Activated B cell treated with CpG ODN at 0.5 μM for 24 hours (primary cell): ENCODE measurements at regions of chr2 and their contacts with region 1.

Region 1: DNA sequence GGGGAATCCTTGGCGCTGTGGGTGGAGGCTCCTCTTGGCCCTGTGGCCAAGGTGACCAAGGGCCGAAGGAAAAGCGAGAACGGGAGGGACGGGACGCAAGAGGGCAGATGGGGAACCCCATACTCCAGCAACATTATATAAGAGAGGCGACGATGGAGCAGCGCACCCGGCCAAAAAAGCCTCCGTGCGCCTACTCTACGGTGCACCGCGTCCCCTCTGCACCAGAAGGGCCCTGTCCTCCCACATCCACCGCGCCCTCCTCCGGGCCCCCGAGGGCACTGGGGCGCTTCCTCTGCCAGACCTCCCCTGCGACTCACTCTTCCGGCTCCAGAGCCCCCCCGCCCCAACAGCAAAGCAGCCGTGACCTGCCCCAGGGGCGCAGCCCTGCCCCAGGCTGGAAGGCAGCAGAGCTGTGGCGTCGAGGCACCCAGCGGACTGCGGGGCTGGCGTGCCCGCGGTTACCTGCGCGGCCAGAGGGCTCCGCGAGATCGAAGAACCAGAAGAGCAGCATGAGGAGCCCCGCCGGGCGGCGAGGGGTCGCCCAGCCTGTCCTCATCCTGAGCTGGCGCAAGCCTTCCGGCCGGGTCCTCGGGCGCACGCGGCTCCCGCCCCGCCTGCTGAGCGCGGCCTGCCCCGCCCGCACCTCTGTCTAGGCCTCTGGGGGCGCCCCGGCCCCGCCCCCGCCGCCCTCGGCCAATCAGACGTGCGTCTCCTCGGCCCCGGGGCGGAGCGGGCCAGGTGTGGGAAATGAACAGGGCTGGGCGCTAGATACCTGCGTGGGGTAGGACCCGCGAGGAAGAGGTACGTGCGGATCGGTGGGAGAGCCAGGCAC is 106.3 kb upstream of the CD302 start:
- DNase-seq: peak; percentile 87
- ATAC-seq: peak; percentile 85
- H3K4me3 Mint-ChIP-seq: peak within 1 kb of the TSS; percentile 99
- H3K27ac Mint-ChIP-seq: peak within 1 kb of the TSS; percentile 98
- H3K4me1 Mint-ChIP-seq: peaks cover 57% of the 10 kb centered on the region
- H3K27me3 Mint-ChIP-seq: no peaks in the 10 kb centered on the region
- CTCF ChIP-seq: no peak

Region 2: GRCh38 chr2:159286709-159287441 is 617.5 kb before region 1 on chr2:
- CTCF ChIA-PET with region 1: no interaction called
- POLR2A ChIA-PET with region 1: interaction called, 5 read pairs
- intact Hi-C with region 1: loop called (anchors 10 kb)
- DNase-seq: peak; percentile 97
- ATAC-seq: peak; percentile 99
- H3K4me3 Mint-ChIP-seq: peak overlapping the region; percentile 93
- H3K27ac Mint-ChIP-seq: peak overlapping the region; percentile 84
- H3K4me1 Mint-ChIP-seq: peaks cover 41% of the 10 kb centered on the region
- H3K27me3 Mint-ChIP-seq: peaks cover 2% of the 10 kb centered on the region
- CTCF ChIP-seq: no peak

Region 3: DNA sequence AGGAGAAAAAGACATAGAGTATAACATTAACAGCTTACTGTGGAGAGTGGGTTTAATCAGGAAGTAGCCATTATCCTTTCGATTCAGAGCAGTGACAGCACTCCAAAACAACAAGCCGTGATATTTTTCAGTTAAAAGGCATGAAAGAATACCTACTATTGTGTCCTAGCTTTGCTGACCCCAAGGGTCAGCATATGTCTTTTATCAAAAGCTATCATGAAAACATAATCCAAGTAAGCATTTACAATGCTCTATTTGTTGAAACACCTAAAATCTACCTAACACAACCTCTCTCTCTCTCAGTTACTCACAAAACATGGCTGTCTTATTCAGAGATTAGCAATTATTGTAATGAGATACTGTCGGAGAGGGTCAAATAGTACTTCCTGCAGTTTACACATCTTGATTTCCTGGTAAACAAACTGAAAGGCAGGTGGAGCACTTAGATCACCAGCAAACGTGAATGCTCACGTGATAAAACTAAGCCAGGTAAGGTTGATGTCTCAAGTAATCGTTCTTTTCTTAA is 388.0 kb before region 1 on chr2:
- CTCF ChIA-PET with region 1: no interaction called
- POLR2A ChIA-PET with region 1: no interaction called
- intact Hi-C with region 1: loop called (anchors 2 kb)
- DNase-seq: no peak
- ATAC-seq: peak; percentile 89
- H3K4me3 Mint-ChIP-seq: peak overlapping the region; percentile 85
- H3K27ac Mint-ChIP-seq: peak overlapping the region; percentile 87
- H3K4me1 Mint-ChIP-seq: peaks cover 31% of the 10 kb centered on the region
- H3K27me3 Mint-ChIP-seq: no peaks in the 10 kb centered on the region
- CTCF ChIP-seq: no peak

Region 4: DNA sequence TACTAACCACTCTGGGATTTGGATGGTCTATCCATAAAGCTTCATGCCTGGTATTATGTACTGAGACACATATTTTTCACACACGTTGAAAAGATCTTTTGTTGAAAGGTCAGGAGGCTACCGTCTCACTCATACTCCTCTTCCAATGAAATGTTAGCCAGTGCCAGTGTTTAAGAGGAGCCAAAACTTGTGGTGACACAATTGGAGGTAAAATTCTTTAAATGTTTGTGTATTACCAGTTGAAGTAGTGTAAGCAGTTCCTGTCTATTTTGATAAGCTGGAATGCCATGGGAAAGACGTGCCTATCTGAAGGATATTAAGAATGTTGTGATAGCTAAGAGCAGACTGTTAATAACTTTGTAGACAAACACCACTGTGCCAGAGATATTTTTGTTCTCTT is 160.0 kb before region 1 on chr2:
- CTCF ChIA-PET with region 1: no interaction called
- POLR2A ChIA-PET with region 1: no interaction called
- intact Hi-C with region 1: no loop called
- DNase-seq: no peak
- ATAC-seq: no peak
- H3K4me3 Mint-ChIP-seq: no peak overlapping the region
- H3K27ac Mint-ChIP-seq: no peak overlapping the region
- H3K4me1 Mint-ChIP-seq: no peaks in the 10 kb centered on the region
- H3K27me3 Mint-ChIP-seq: no peaks in the 10 kb centered on the region
- CTCF ChIP-seq: no peak

Region 5: GRCh38 chr2:159879051-159879604 is 25.2 kb before region 1 on chr2:
- CTCF ChIA-PET with region 1: no interaction called
- POLR2A ChIA-PET with region 1: interaction called, 35 read pairs
- intact Hi-C with region 1: loop called (anchors 1 kb)
- DNase-seq: no peak
- ATAC-seq: peak; percentile 88
- H3K4me3 Mint-ChIP-seq: peak overlapping the region; percentile 46
- H3K27ac Mint-ChIP-seq: peak overlapping the region; percentile 91
- H3K4me1 Mint-ChIP-seq: peaks cover 45% of the 10 kb centered on the region
- H3K27me3 Mint-ChIP-seq: no peaks in the 10 kb centered on the region
- CTCF ChIP-seq: no peak

Region 6: DNA sequence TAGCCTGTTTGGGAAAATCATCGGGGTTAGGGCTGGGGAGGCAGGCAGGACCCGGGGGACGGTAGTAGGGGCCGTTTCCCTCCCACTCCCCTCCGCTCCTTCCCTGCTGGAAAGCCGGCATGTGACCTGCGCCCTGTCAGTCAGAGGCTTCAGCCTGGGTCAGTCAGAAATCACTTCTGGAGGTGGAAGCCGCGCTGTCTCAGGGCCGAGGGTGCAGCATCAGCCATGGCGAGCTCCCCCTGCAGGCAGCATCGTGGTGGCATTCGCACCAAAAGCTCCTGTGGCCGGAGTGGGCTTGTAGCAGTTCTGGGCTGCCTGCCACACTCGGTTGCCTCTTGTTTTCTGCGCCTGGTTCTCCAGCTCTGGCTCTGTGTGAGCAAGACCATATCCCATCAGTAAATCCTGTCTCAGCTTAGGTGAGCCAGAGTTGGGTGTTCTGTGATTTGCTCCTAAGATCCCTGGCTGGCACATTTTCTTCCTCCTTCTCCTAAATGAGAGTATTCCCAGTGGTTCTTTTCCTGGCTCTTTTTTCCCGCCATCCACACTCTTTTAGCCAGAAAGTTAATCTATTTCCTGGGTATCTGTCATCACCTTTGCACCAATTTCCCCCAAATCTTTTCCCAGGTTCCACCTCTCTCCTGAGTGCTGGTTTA is 17.5 kb after region 1 on chr2:
- CTCF ChIA-PET with region 1: interaction called, 10 read pairs
- POLR2A ChIA-PET with region 1: interaction called, 14 read pairs
- intact Hi-C with region 1: loop called (anchors 1 kb)
- DNase-seq: peak; percentile 65
- ATAC-seq: peak; percentile 97
- H3K4me3 Mint-ChIP-seq: no peak overlapping the region
- H3K27ac Mint-ChIP-seq: peak overlapping the region; percentile 6
- H3K4me1 Mint-ChIP-seq: peaks cover 28% of the 10 kb centered on the region
- H3K27me3 Mint-ChIP-seq: no peaks in the 10 kb centered on the region
- CTCF ChIP-seq: no peak

Region 7: DNA sequence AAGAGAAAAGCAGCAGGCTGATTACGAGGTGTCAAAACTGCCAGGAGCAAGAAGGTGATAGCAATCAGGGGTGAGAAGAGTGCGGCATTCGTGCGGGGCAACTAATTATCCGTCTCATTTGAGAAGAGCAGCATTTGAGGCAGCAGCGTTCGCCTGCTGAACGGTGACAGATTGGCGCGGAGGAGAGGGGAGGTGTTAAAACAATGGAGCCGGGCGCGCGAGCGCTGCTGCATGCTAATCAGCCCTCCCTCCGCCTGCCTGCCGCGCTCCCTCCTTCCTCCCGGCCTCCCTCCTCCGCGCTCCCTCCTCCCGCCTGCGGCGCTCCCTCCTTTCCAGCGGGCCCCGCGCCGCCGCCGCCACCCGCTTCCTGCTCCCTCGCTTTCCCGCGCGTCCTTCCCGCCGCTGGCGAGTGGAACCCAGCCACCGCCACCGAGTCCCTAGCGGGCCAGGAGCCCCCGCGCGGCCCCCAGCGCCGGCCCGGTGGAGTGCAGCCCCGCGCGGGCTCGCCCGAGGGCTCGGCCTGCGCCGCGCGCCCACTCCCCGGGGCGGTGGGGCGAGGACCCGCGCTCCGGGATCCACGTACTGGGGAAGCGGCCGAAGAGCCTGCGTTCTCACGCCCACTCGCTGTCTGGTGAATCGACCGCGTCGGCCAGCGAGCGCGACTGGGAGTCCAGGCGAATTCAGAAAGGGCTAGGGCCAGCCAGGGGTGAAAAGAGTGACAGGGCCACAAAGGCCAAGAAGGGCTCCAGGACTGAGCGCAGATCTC is 1334.4 kb after region 1 on chr2:
- CTCF ChIA-PET with region 1: no interaction called
- POLR2A ChIA-PET with region 1: no interaction called
- intact Hi-C with region 1: loop called (anchors 5 kb)
- DNase-seq: peak; percentile 41
- ATAC-seq: peak; percentile 45
- H3K4me3 Mint-ChIP-seq: peak overlapping the region; percentile 86
- H3K27ac Mint-ChIP-seq: peak overlapping the region; percentile 54
- H3K4me1 Mint-ChIP-seq: peaks cover 55% of the 10 kb centered on the region
- H3K27me3 Mint-ChIP-seq: peaks cover 2% of the 10 kb centered on the region
- CTCF ChIP-seq: no peak

Region 8: GRCh38 chr2:161308178-161308955 is 1404.0 kb after region 1 on chr2 and contains the start of gene PSMD14:
- CTCF ChIA-PET with region 1: no interaction called
- POLR2A ChIA-PET with region 1: no interaction called
- intact Hi-C with region 1: loop called (anchors 10 kb)
- DNase-seq: peak; percentile 80
- ATAC-seq: peak; percentile 92
- H3K4me3 Mint-ChIP-seq: peak within 1 kb of the TSS; percentile 99
- H3K27ac Mint-ChIP-seq: peak within 1 kb of the TSS; percentile 97
- H3K4me1 Mint-ChIP-seq: peaks cover 33% of the 10 kb centered on the region
- H3K27me3 Mint-ChIP-seq: no peaks in the 10 kb centered on the region
- CTCF ChIP-seq: no peak
- total RNA-seq, gene PSMD14: 55.0 and 55.1 TPM in 2 replicates